ENCODE measurements at regions of chr2 and their contacts with region 1.

Region 1: GRCh38 chr2:27370026-27370815 is at the starts of genes EIF2B4 and SNX17:
- DNase-seq: peak; percentile 98 to 100 (median 99)
- ATAC-seq: peak; percentile 89
- H3K4me3 ChIP-seq: peak within 1 kb of the TSS; percentile 71
- H3K4me3 Mint-ChIP-seq: peak within 1 kb of the TSS; percentile 96
- H3K27ac ChIP-seq: peak within 1 kb of the TSS; percentile 86 to 88
- H3K27ac Mint-ChIP-seq: peak within 1 kb of the TSS; percentile 83
- H3K4me1 ChIP-seq: peaks cover 46% of the 10 kb centered on the region
- H3K4me1 Mint-ChIP-seq: peaks cover 42% of the 10 kb centered on the region
- H3K27me3 ChIP-seq: no peaks in the 10 kb centered on the region
- H3K27me3 Mint-ChIP-seq: no peaks in the 10 kb centered on the region
- CTCF ChIP-seq: peak; percentile 80
- total RNA-seq, gene EIF2B4: 33.2 to 34.0 TPM
- total RNA-seq, gene SNX17: 66.3 to 67.9 TPM

Region 2: GRCh38 chr2:26255759-26256384 is 1114.3 kb before region 1 on chr2:
- CTCF ChIA-PET with region 1: no interaction called
- POLR2A ChIA-PET with region 1: no interaction called
- intact Hi-C with region 1: no loop called
- DNase-seq: no peak
- ATAC-seq: no peak
- H3K4me3 ChIP-seq: no peak overlapping the region
- H3K4me3 Mint-ChIP-seq: no peak overlapping the region
- H3K27ac ChIP-seq: no peak overlapping the region
- H3K27ac Mint-ChIP-seq: no peak overlapping the region
- H3K4me1 ChIP-seq: peaks cover 5% of the 10 kb centered on the region
- H3K4me1 Mint-ChIP-seq: peaks cover 19% of the 10 kb centered on the region
- H3K27me3 ChIP-seq: no peaks in the 10 kb centered on the region
- H3K27me3 Mint-ChIP-seq: no peaks in the 10 kb centered on the region
- CTCF ChIP-seq: no peak

Region 3: GRCh38 chr2:27211829-27212627 is 158.2 kb before region 1 on chr2 and contains the starts of genes ATRAID and SLC5A6:
- CTCF ChIA-PET with region 1: no interaction called
- POLR2A ChIA-PET with region 1: no interaction called
- intact Hi-C with region 1: loop called (anchors 5 kb)
- DNase-seq: peak; percentile 76 to 95 (median 86)
- ATAC-seq: peak; percentile 83
- H3K4me3 ChIP-seq: peak within 1 kb of the TSS; percentile 78
- H3K4me3 Mint-ChIP-seq: peak within 1 kb of the TSS; percentile 98
- H3K27ac ChIP-seq: peak within 1 kb of the TSS; percentile 96 to 97
- H3K27ac Mint-ChIP-seq: peak within 1 kb of the TSS; percentile 98
- H3K4me1 ChIP-seq: peaks cover 26% of the 10 kb centered on the region
- H3K4me1 Mint-ChIP-seq: peaks cover 40% of the 10 kb centered on the region
- H3K27me3 ChIP-seq: no peaks in the 10 kb centered on the region
- H3K27me3 Mint-ChIP-seq: no peaks in the 10 kb centered on the region
- CTCF ChIP-seq: no peak
- total RNA-seq, gene ATRAID: 79.1 to 82.5 TPM
- total RNA-seq, gene SLC5A6: 196 to 207 TPM

Region 4: GRCh38 chr2:27356382-27357181 is 13.6 kb before region 1 on chr2 and contains the start of gene GTF3C2:
- CTCF ChIA-PET with region 1: interaction called, 8 read pairs
- POLR2A ChIA-PET with region 1: interaction called, 45 read pairs
- intact Hi-C with region 1: loop called (anchors 1 kb)
- DNase-seq: peak; percentile 82 to 97 (median 88)
- ATAC-seq: peak; percentile 78
- H3K4me3 ChIP-seq: peak within 1 kb of the TSS; percentile 86
- H3K4me3 Mint-ChIP-seq: peak within 1 kb of the TSS; percentile 96
- H3K27ac ChIP-seq: peak within 1 kb of the TSS; percentile 87 to 89
- H3K27ac Mint-ChIP-seq: peak within 1 kb of the TSS; percentile 99
- H3K4me1 ChIP-seq: peaks cover 44% of the 10 kb centered on the region
- H3K4me1 Mint-ChIP-seq: peaks cover 56% of the 10 kb centered on the region
- H3K27me3 ChIP-seq: no peaks in the 10 kb centered on the region
- H3K27me3 Mint-ChIP-seq: no peaks in the 10 kb centered on the region
- CTCF ChIP-seq: no peak
- total RNA-seq, gene GTF3C2: 54.6 to 56.8 TPM

Region 5: GRCh38 chr2:27390822-27391679 is 20.8 kb after region 1 on chr2:
- CTCF ChIA-PET with region 1: no interaction called
- POLR2A ChIA-PET with region 1: interaction called, 5 read pairs
- intact Hi-C with region 1: loop called in 1 of 2 experiments (anchors 1 kb)
- DNase-seq: peak in 3 of 14 experiments; percentile 73 to 77 (median 74)
- ATAC-seq: peak; percentile 80
- H3K4me3 ChIP-seq: no peak overlapping the region
- H3K4me3 Mint-ChIP-seq: peak overlapping the region; percentile 32
- H3K27ac ChIP-seq: peak overlapping the region; percentile 47 to 52
- H3K27ac Mint-ChIP-seq: peak overlapping the region; percentile 86
- H3K4me1 ChIP-seq: peaks cover 25% of the 10 kb centered on the region
- H3K4me1 Mint-ChIP-seq: peaks cover 32% of the 10 kb centered on the region
- H3K27me3 ChIP-seq: no peaks in the 10 kb centered on the region
- H3K27me3 Mint-ChIP-seq: no peaks in the 10 kb centered on the region
- CTCF ChIP-seq: no peak

Region 6: DNA sequence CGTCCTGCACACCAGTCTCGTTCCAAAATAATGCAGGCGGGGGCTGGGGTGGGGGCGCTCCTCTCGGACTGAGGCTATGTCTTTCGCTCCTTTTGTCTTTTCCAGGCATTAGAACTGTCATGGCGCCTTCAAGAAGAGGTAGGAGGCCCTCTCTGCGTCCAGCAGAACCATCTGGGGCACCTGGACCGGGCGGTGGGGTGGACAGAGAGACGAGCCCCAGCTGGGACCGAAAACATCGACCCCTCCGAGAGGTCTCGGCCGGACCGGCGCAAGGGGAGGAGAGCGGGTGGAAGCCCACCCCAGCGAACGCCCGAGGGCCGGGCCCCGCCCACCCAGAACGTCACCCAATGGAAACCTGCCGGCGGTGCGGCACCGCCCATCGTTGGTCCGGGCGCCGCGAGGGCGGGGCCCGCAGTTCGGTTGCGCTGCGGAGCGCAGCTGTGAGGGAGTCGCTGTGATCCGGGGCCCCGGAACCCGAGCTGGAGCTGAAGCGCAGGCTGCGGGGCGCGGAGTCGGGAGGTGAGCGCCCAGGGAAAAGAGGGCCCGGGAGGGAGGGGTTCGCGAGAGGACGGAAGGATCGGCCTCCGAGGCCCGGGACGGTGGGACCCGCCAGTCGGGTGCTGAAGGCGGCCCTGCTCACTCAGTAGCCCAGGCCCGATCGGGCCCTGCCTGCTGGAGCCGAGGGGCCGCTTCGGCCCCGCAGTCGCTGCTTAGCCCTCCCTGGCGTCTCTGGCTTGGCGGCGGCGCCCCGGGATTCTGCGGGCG is 58.2 kb after region 1 on chr2 and contains the start of gene NRBP1:
- CTCF ChIA-PET with region 1: interaction called, 8 read pairs
- POLR2A ChIA-PET with region 1: interaction called, 14 read pairs
- intact Hi-C with region 1: loop called in 1 of 2 experiments (anchors 5 kb)
- DNase-seq: peak; percentile 77 to 95 (median 90)
- ATAC-seq: peak; percentile 93
- H3K4me3 ChIP-seq: peak within 1 kb of the TSS; percentile 95
- H3K4me3 Mint-ChIP-seq: peak within 1 kb of the TSS; percentile 100
- H3K27ac ChIP-seq: peak within 1 kb of the TSS; percentile 80 to 90
- H3K27ac Mint-ChIP-seq: peak within 1 kb of the TSS; percentile 96
- H3K4me1 ChIP-seq: peaks cover 40% of the 10 kb centered on the region
- H3K4me1 Mint-ChIP-seq: peaks cover 41% of the 10 kb centered on the region
- H3K27me3 ChIP-seq: no peaks in the 10 kb centered on the region
- H3K27me3 Mint-ChIP-seq: no peaks in the 10 kb centered on the region
- CTCF ChIP-seq: no peak
- total RNA-seq, gene NRBP1: 169 to 181 TPM

Region 7: DNA sequence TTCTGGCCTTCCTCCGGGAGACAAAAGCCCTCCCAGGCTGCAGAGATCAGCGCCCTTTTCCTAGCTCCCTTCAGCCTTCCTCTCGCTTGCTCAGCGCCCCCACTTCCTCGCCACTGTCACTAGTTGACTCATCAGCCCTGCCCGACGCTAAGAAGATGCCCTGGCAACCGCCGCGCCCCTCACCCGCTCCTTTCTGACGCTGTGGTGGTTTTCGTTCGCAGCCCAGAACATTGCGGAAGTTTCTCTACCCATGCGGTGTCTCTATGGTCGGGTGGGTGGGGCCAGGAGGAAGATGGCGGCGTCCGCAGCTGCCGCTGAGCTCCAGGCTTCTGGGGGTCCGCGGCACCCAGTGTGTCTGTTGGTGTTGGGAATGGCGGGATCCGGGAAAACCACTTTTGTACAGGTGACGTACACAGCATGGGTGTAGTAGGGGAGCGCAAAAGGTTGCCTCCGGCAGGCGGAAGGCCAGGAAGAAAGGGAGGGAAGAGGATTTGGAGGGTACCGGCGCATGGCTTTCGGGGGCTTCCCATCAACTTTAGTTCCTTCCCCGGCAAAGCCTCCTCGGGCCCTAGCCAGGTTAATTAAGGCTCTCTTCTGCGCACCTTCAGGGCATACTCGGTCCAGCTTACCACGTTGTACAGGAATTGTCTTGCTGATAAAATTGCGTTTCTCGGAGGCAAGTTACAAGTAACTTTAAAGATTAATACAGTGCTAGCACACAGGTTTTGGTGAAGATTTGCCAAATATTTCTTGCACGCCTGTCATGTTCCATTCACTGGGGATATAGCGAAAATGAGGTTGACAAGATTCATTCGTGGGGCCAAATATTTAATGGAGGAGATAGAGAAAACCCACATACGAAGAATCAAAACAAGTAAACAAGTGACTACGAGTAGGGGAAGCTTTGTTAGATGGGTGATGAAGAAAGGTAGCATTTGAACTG is 258.8 kb after region 1 on chr2 and contains the starts of genes CCDC121 and GPN1:
- CTCF ChIA-PET with region 1: no interaction called
- POLR2A ChIA-PET with region 1: interaction called, 3 read pairs
- intact Hi-C with region 1: loop called in 1 of 2 experiments (anchors 10 kb)
- DNase-seq: peak; percentile 89 to 97 (median 94)
- ATAC-seq: peak; percentile 99
- H3K4me3 ChIP-seq: peak within 1 kb of the TSS; percentile 86
- H3K4me3 Mint-ChIP-seq: no peak within 1 kb of the TSS
- H3K27ac ChIP-seq: peak within 1 kb of the TSS; percentile 72 to 78
- H3K27ac Mint-ChIP-seq: no peak within 1 kb of the TSS
- H3K4me1 ChIP-seq: peaks cover 21% of the 10 kb centered on the region
- H3K4me1 Mint-ChIP-seq: peaks cover 20% of the 10 kb centered on the region
- H3K27me3 ChIP-seq: no peaks in the 10 kb centered on the region
- H3K27me3 Mint-ChIP-seq: no peaks in the 10 kb centered on the region
- CTCF ChIP-seq: no peak
- total RNA-seq, gene CCDC121: 0.47 to 0.91 TPM
- total RNA-seq, gene GPN1: 24.6 to 28.1 TPM